Activated CD8-positive, alpha-beta T cell treated with anti-CD3 and anti-CD28 coated beads for 36 hours (primary cell): ENCODE measurements at regions of chr14 and their contacts with region 1.

Region 1: GRCh38 chr14:35404449-35405303 is at the start of gene NFKBIA:
- DNase-seq: peak; percentile 95
- ATAC-seq: peak; percentile 69
- H3K4me3 Mint-ChIP-seq: peak within 1 kb of the TSS; percentile 94
- H3K27ac Mint-ChIP-seq: peak within 1 kb of the TSS; percentile 97
- H3K4me1 Mint-ChIP-seq: peaks cover 30% of the 10 kb centered on the region
- H3K27me3 Mint-ChIP-seq: no peaks in the 10 kb centered on the region
- CTCF ChIP-seq: no peak
- total RNA-seq, gene NFKBIA: 218 to 227 TPM

Region 2: DNA sequence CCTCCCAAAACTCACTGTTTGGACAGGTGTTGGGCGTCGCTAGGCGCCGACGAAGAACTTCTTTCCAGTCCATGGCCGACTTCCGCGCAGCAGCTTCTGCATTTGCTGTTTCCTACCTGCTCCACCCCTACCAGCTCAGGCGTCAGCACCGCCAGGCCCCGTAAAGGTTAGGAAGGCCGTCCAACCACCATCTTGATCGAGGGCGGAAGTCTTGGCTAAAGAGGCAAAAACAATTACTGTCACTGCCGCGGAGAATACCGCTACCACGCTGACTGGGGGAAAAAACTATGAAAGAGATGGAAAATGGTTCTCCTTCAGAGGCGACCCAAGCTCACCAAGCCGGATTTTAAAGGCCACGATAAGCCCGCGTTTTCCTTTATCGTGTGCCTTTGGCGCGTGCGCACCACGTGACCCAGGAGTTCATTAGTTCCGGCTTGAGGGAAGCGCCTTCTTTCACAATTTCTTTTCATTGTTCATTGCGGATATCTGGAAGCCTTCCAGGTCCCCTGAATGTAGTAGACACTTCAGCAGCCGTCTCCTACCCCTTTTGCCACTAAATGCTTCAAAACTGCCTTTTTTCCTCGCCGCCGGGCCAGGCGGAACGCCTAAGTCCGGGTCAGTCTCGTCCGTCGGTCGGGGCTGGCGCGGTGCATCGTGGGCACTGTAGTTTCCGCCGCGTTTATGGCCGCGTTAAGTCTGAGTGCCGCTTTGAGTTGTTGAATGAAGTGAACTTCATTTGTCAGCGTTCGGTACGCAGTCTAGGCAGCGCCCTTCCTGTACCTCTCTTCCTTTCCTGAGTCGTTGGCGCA is 282.6 kb before region 1 on chr14 and contains the starts of genes PPP2R3C and PRORP:
- CTCF ChIA-PET with region 1: interaction called, 5 read pairs
- POLR2A ChIA-PET with region 1: interaction called, 56 read pairs
- intact Hi-C with region 1: no loop called
- DNase-seq: peak; percentile 94
- ATAC-seq: peak; percentile 86
- H3K4me3 Mint-ChIP-seq: peak within 1 kb of the TSS; percentile 84
- H3K27ac Mint-ChIP-seq: peak within 1 kb of the TSS; percentile 99
- H3K4me1 Mint-ChIP-seq: peaks cover 58% of the 10 kb centered on the region
- H3K27me3 Mint-ChIP-seq: no peaks in the 10 kb centered on the region
- CTCF ChIP-seq: no peak
- total RNA-seq, gene PPP2R3C: 38.2 to 40.7 TPM
- total RNA-seq, gene PRORP: 30.6 to 34.4 TPM

Region 3: DNA sequence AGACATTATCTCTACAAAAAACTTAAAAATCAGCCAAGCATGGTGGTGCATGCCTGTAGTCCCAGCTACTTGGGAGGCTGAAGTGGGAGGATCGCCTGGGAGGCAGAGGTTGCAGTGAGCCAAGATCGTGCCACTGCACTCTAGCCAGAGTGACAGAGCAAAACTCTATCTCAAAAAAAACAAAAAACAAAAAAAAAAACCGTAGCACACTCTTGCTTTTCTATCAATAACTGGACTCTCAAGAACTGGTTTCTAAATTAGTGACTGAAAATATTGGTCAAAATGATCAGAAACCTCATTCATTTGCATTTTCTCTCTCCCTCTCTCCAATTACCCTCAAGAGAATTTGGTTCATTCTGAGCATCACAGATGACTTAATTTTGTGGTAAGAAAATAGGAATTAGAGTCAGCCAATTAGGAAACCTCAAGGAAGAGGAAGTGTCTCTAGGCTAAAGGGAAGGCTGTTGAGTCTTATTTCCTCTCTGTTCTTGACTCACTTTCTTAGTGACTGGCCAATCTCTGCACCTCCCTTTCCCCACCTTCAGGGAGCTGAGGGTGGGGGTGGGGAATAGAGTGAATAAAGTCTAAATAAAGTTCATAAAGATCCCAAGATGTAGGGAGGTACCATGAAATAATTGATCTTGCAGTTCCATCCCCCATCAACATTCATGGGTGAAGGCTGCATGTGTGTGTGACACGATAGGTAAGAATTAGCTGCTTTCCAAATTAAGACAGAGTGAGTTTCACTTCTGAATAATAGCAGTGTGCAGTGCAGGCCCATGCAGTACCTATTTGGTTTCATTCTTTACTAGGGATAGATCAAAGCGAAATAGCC is 119.3 kb before region 1 on chr14:
- CTCF ChIA-PET with region 1: interaction called, 27 read pairs
- POLR2A ChIA-PET with region 1: interaction called, 222 read pairs
- intact Hi-C with region 1: no loop called
- DNase-seq: peak; percentile 54
- ATAC-seq: peak; percentile 63
- H3K4me3 Mint-ChIP-seq: peak overlapping the region; percentile 51
- H3K27ac Mint-ChIP-seq: peak overlapping the region; percentile 97
- H3K4me1 Mint-ChIP-seq: peaks cover 50% of the 10 kb centered on the region
- H3K27me3 Mint-ChIP-seq: no peaks in the 10 kb centered on the region
- CTCF ChIP-seq: no peak

Region 4: GRCh38 chr14:35320472-35320871 is 84.2 kb before region 1 on chr14:
- CTCF ChIA-PET with region 1: interaction called, 15 read pairs
- POLR2A ChIA-PET with region 1: interaction called, 57 read pairs
- intact Hi-C with region 1: no loop called
- DNase-seq: no peak
- ATAC-seq: no peak
- H3K4me3 Mint-ChIP-seq: no peak overlapping the region
- H3K27ac Mint-ChIP-seq: no peak overlapping the region
- H3K4me1 Mint-ChIP-seq: peaks cover 3% of the 10 kb centered on the region
- H3K27me3 Mint-ChIP-seq: no peaks in the 10 kb centered on the region
- CTCF ChIP-seq: no peak

Region 5: DNA sequence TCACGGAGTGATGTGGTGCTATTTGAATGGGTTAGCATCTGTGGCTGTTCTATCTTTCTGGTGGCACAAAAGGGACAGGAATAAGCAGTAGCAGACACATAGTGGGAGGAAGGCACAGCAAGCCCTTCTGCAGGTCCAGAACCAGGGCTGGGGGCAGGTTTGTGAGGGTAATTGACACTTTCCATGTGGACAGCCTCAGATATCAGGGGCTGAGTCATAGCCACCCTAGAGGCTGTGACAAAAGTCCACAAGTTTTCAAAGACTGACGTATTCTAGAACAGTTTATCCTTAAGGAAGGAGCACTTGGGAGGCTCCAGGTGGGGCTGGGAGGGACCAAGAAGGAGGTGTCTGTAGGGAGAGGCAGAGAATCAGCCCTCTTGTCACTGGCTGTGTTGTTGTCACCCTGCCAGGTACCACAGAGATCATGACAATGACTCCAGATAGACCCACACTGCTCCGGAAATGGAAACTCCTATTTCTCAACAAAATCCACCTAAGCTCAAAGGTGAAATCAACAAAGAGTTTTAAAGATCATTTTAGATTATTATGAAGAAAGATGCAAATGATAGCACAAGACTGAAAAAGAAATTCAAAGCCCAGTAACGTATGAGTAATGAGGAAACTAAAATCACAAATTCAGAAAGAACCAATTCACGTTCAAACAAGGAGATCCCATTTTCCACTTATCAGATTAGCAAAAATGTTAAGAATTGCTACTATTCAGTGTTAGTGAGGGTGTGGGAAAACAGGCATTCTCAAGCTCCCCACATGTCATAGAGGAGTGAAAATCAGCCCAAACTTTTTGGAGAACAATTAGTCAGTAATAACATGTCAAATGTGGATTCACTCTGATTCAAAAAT is 48.5 kb before region 1 on chr14:
- CTCF ChIA-PET with region 1: interaction called, 8 read pairs
- POLR2A ChIA-PET with region 1: interaction called, 18 read pairs
- intact Hi-C with region 1: loop called (anchors 5 kb)
- DNase-seq: peak; percentile 75
- ATAC-seq: peak; percentile 74
- H3K4me3 Mint-ChIP-seq: peak overlapping the region; percentile 8
- H3K27ac Mint-ChIP-seq: peak overlapping the region; percentile 85
- H3K4me1 Mint-ChIP-seq: peaks cover 43% of the 10 kb centered on the region
- H3K27me3 Mint-ChIP-seq: no peaks in the 10 kb centered on the region
- CTCF ChIP-seq: no peak

Region 6: GRCh38 chr14:35416108-35416750 is 11.6 kb after region 1 on chr14:
- CTCF ChIA-PET with region 1: interaction called, 88 read pairs
- POLR2A ChIA-PET with region 1: interaction called, 207 read pairs
- intact Hi-C with region 1: no loop called
- DNase-seq: peak; percentile 88
- ATAC-seq: peak; percentile 67
- H3K4me3 Mint-ChIP-seq: peak overlapping the region; percentile 72
- H3K27ac Mint-ChIP-seq: peak overlapping the region; percentile 98
- H3K4me1 Mint-ChIP-seq: peaks cover 55% of the 10 kb centered on the region
- H3K27me3 Mint-ChIP-seq: no peaks in the 10 kb centered on the region
- CTCF ChIP-seq: no peak